ENCODE measurements at regions of chr13 and their contacts with region 1.

Region 1: GRCh38 chr13:106156468-106156867 is 379.0 kb downstream of the EFNB2 start:
- DNase-seq: peak; percentile 97
- H3K4me3 Mint-ChIP-seq: peak overlapping the region; percentile 4
- H3K27ac Mint-ChIP-seq: peak overlapping the region; percentile 86
- H3K4me1 Mint-ChIP-seq: peaks cover 43% of the 10 kb centered on the region
- H3K27me3 Mint-ChIP-seq: no peaks in the 10 kb centered on the region
- CTCF ChIP-seq: no peak

Region 2: DNA sequence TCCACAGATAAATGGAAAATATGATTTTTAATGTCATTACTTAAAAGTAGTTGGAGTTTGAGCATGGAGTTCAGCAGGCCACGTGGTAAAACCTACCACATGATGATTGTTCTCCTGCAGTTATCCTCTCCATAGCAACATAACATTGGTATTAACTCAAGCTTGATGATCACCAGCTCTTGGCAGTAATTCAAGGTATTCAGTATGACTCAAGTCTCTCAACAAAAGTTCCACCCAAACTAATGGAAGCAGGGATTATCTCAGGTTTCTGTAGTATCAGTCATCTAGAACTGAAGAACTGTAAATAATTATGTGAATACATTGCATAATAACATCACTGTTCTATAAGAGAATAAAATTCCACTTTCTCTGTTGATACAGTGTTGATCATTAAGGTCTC is 713.5 kb before region 1 on chr13:
- CTCF ChIA-PET with region 1: no interaction called
- POLR2A ChIA-PET with region 1: no interaction called
- intact Hi-C with region 1: loop called (anchors 5 kb)
- DNase-seq: peak; percentile 93
- H3K4me3 Mint-ChIP-seq: no peak overlapping the region
- H3K27ac Mint-ChIP-seq: peak overlapping the region; percentile 95
- H3K4me1 Mint-ChIP-seq: peaks cover 21% of the 10 kb centered on the region
- H3K27me3 Mint-ChIP-seq: no peaks in the 10 kb centered on the region
- CTCF ChIP-seq: no peak

Region 3: DNA sequence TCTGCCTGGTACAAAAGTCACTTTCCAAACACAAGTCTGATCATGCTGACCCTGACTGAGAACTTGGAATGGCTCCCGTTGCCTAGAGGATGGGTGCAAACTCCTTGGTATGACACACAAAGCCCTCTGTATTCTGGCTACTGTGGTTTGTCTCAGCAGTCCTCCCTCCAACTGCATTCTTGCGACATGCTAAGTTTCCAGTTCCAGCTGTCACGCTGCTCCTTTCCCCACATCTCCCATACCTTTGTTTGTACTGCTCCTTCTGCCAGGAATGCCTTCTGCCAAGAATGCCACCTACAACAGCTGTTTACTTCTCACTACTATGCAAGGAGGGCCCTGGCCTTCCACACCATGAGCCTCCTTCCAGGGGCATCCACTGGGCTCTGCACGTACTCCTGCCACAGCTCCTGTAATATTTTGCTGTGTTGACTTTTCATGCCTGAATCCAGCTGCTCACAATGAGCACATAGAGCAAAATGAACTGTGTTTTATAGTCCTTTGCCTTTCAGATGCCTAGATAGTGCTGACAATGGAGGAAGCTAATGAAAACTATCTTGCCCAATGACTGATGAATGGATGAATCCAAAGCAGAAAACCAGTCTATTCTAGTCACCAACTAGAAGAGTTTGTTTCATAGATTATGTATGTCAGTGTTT is 164.7 kb before region 1 on chr13:
- CTCF ChIA-PET with region 1: no interaction called
- POLR2A ChIA-PET with region 1: interaction called, 7 read pairs
- intact Hi-C with region 1: loop called (anchors 2 kb)
- DNase-seq: peak; percentile 99
- H3K4me3 Mint-ChIP-seq: peak overlapping the region; percentile 49
- H3K27ac Mint-ChIP-seq: peak overlapping the region; percentile 100
- H3K4me1 Mint-ChIP-seq: peaks cover 35% of the 10 kb centered on the region
- H3K27me3 Mint-ChIP-seq: no peaks in the 10 kb centered on the region
- CTCF ChIP-seq: no peak

Region 4: DNA sequence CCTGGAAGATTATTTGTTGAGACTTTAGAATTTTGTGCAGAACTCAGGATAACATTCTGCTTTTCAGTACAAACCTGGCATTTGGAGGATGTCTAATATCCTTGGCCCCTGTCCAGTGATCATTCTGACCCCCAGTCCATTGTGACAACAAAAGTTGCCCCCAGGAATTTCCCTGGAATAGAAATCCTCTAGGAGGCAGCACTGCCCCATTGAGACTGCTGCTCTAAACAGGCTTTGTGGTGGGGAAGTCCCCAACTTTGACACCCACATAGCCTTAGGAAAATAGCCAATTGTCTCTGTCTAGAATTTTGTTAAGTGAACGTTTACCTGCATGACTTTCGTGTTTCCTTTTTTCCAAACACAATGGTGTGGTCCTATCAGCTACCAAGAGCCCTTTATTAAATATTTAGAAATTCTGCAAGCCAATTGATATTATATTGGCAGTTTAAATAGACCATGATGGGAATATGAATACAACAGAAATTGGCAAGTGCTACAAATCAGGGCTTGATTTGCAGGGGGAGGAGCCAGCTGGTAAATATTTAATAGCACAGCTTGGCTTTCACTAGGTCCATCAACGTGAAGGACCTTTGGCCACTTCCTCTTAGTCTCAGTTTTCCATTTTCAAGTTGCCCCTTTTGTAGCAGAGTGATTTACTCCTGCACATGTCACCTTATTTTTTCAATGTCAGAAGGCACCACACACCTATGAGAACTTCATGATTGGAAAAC is 72.7 kb before region 1 on chr13:
- CTCF ChIA-PET with region 1: no interaction called
- POLR2A ChIA-PET with region 1: no interaction called
- intact Hi-C with region 1: loop called (anchors 1 kb)
- DNase-seq: peak; percentile 84
- H3K4me3 Mint-ChIP-seq: no peak overlapping the region
- H3K27ac Mint-ChIP-seq: no peak overlapping the region
- H3K4me1 Mint-ChIP-seq: peaks cover 22% of the 10 kb centered on the region
- H3K27me3 Mint-ChIP-seq: no peaks in the 10 kb centered on the region
- CTCF ChIP-seq: peak; percentile 73

Region 5: GRCh38 chr13:106133025-106133424 is 23.4 kb before region 1 on chr13:
- CTCF ChIA-PET with region 1: interaction called, 5 read pairs
- POLR2A ChIA-PET with region 1: interaction called, 10 read pairs
- intact Hi-C with region 1: no loop called
- DNase-seq: peak; percentile 68
- H3K4me3 Mint-ChIP-seq: peak overlapping the region; percentile 29
- H3K27ac Mint-ChIP-seq: peak overlapping the region; percentile 94
- H3K4me1 Mint-ChIP-seq: peaks cover 24% of the 10 kb centered on the region
- H3K27me3 Mint-ChIP-seq: no peaks in the 10 kb centered on the region
- CTCF ChIP-seq: no peak

Region 6: DNA sequence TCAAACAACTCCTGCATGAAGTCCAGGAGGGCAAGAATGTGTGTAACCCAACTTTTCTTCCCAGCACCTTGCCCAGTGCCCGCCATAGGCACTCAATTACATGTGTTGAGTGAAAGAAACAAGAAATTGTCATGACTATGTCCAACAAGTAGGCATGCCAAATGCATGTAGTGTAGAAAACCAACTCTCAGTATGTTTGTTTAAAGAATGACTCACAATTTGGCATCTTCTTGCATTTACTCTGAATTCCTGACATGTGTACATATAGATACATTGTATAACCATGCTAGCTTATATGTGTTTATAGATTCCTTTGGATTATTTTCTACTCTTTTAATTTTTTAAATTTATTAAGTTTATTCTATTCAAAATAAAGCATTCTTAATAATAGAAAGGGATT is 74.0 kb after region 1 on chr13:
- CTCF ChIA-PET with region 1: no interaction called
- POLR2A ChIA-PET with region 1: no interaction called
- intact Hi-C with region 1: no loop called
- DNase-seq: peak; percentile 84
- H3K4me3 Mint-ChIP-seq: no peak overlapping the region
- H3K27ac Mint-ChIP-seq: no peak overlapping the region
- H3K4me1 Mint-ChIP-seq: no peaks in the 10 kb centered on the region
- H3K27me3 Mint-ChIP-seq: no peaks in the 10 kb centered on the region
- CTCF ChIP-seq: no peak

Region 7: DNA sequence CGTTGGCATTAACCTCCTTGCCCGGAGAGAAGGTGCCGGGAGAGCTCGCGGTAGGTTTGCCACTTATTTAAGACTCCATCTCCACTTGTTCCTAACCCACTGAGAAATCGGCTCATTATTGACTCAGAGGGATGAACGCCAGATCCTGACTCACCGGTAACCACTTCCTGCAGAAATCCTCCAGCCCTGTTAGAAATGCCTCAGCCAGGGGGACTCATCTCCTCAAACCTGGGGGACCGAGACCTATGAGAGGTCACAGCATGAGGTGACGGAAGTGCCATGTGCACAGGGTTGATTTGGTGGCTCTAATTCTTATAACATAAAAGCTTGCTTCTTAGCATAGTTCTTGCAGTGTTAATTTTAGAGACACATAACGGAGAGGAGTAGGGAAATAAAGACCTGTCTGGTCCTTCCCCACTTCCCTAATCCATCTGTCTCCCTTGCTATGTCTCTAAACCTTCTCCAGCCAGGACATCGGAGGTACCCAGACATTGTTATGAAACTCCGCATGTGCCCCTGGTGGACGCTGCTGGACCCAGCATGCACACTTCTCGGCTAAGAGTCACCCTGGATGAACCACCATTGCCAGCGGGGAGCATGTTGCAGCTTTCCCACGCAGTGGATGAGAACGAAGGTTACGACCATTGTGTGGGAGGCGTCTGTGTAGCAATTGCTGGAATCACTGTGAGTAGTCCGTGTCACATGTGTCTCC is 220.1 kb after region 1 on chr13:
- CTCF ChIA-PET with region 1: no interaction called
- POLR2A ChIA-PET with region 1: interaction called, 3 read pairs
- intact Hi-C with region 1: loop called (anchors 1 kb)
- DNase-seq: peak; percentile 97
- H3K4me3 Mint-ChIP-seq: peak overlapping the region; percentile 53
- H3K27ac Mint-ChIP-seq: peak overlapping the region; percentile 29
- H3K4me1 Mint-ChIP-seq: peaks cover 48% of the 10 kb centered on the region
- H3K27me3 Mint-ChIP-seq: no peaks in the 10 kb centered on the region
- CTCF ChIP-seq: no peak

Region 8: GRCh38 chr13:106507560-106508274 is 351.2 kb after region 1 on chr13:
- CTCF ChIA-PET with region 1: no interaction called
- POLR2A ChIA-PET with region 1: interaction called, 10 read pairs
- intact Hi-C with region 1: loop called (anchors 2 kb)
- DNase-seq: peak; percentile 98
- H3K4me3 Mint-ChIP-seq: peak overlapping the region; percentile 70
- H3K27ac Mint-ChIP-seq: peak overlapping the region; percentile 89
- H3K4me1 Mint-ChIP-seq: peaks cover 9% of the 10 kb centered on the region
- H3K27me3 Mint-ChIP-seq: no peaks in the 10 kb centered on the region
- CTCF ChIP-seq: no peak

Region 9: DNA sequence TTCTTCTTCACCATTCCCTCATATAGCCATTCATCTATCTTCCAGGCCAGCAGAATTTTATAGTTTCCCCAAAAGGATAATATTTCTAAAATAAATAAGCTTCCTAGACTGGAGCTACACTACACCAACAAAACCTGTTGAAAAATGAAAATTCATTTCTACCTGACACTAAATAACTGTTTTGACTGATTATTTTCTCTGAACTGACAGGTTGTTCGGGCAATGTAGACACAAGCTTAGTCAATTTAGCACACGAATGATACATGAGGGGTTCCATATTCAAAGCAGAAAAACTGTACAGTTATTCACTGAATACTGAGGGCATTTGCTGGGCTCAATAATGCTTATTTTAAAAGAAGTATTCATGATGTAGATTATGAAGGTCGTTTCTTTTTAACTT is 1469.2 kb after region 1 on chr13:
- CTCF ChIA-PET with region 1: no interaction called
- POLR2A ChIA-PET with region 1: no interaction called
- intact Hi-C with region 1: no loop called
- DNase-seq: no peak
- H3K4me3 Mint-ChIP-seq: no peak overlapping the region
- H3K27ac Mint-ChIP-seq: no peak overlapping the region
- H3K4me1 Mint-ChIP-seq: no peaks in the 10 kb centered on the region
- H3K27me3 Mint-ChIP-seq: no peaks in the 10 kb centered on the region
- CTCF ChIP-seq: no peak